ENCODE measurements at regions of chr12 and their contacts with region 1.

Region 1: GRCh38 chr12:92145731-92146496 is at the start of gene BTG1:
- DNase-seq: peak; percentile 94 to 100 (median 99)
- H3K4me3 ChIP-seq: peak within 1 kb of the TSS; percentile 98
- H3K4me3 Mint-ChIP-seq: peak within 1 kb of the TSS; percentile 95 to 100 (median 100)
- H3K27ac ChIP-seq: peak within 1 kb of the TSS; percentile 98
- H3K27ac Mint-ChIP-seq: peak within 1 kb of the TSS; percentile 95 to 100 (median 99)
- H3K4me1 ChIP-seq: peaks cover 16% of the 10 kb centered on the region
- H3K4me1 Mint-ChIP-seq: peaks cover 22 to 27% (median 25%) of the 10 kb centered on the region in 3 donors
- H3K27me3 ChIP-seq: no peaks in the 10 kb centered on the region
- H3K27me3 Mint-ChIP-seq: peaks cover 0 to 14% of the 10 kb centered on the region in 2 donors
- total RNA-seq, gene BTG1: 98.3 to 103 TPM

Region 2: DNA sequence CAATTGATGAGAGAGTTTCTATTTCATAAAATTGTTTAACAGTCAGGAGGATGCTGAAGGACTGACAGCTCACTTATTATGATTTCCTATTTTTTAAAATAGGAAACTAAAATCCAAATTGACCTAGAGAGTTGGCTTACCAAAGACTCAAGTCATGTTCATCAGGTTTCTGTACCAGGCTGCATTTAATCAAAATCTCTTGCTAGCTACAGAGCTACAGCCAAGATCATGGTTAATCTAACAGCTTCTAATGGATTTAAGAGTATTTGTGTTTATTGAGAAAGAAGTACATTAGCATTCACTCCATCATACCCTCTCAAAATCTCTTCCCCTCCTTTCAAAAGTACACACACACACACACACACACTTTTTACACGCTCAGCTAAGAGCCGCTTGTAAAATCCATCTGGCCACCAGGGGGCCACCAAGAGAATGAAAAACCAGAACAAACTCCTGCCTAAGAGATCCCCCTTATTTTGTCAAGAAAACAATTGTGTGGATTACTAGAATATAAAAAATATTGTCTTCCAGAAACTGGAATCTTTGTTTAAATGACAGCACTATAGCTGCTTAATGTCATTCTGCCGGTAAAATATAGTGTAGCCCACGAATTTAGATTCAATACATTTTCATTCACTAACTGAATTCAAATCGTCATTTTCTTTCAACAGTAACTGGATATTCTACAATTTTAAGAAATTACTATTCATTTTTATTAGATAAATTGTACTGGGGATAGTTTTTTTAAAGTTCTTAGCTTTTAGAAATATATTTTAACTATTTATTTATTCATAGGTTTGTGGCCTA is 334.2 kb before region 1 on chr12:
- CTCF ChIA-PET with region 1: interaction called, 26 read pairs
- POLR2A ChIA-PET with region 1: interaction called, 22 read pairs
- DNase-seq: peak; percentile 56 to 80 (median 62)
- H3K4me3 ChIP-seq: no peak overlapping the region
- H3K4me3 Mint-ChIP-seq: peak overlapping the region in 5 of 7 donors; percentile 1 to 60 (median 30)
- H3K27ac ChIP-seq: no peak overlapping the region
- H3K27ac Mint-ChIP-seq: peak overlapping the region in 7 of 8 donors; percentile 12 to 91 (median 88)
- H3K4me1 ChIP-seq: peaks cover 12% of the 10 kb centered on the region
- H3K4me1 Mint-ChIP-seq: peaks cover 20 to 38% (median 36%) of the 10 kb centered on the region in 3 donors
- H3K27me3 ChIP-seq: no peaks in the 10 kb centered on the region
- H3K27me3 Mint-ChIP-seq: peaks cover 0 to 1% of the 10 kb centered on the region in 2 donors

Region 3: DNA sequence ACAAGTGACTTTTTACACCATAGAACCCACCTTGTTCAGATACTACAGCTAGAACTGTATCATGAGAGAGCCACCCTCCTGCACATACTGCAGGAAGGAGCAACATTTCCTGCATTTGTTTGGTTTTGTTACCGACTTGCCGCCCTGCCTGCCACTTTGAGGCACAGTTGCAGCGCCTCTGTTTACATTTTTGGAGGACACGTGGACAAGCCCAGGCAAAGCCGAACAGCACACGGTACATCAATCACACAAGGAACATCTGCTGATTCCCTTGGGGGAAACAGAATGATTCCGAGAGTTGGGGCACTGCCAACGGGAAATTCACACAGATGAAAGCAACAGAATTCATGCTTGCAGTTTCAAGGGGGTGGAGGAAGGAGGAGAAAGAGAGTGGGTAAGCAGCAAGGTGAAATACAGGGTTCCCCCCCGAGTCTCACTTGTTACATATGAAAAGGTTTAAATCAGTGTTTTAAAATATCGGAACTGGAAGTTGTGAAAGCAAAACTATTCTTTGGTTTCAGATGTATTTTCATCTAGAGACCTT is 111.0 kb before region 1 on chr12:
- CTCF ChIA-PET with region 1: interaction called, 20 read pairs
- POLR2A ChIA-PET with region 1: interaction called, 78 read pairs
- DNase-seq: peak; percentile 11 to 75 (median 57)
- H3K4me3 ChIP-seq: peak overlapping the region; percentile 44
- H3K4me3 Mint-ChIP-seq: peak overlapping the region; percentile 89 to 96 (median 91)
- H3K27ac ChIP-seq: peak overlapping the region; percentile 36
- H3K27ac Mint-ChIP-seq: peak overlapping the region; percentile 96 to 100 (median 98)
- H3K4me1 ChIP-seq: peaks cover 78% of the 10 kb centered on the region
- H3K4me1 Mint-ChIP-seq: peaks cover 79 to 99% (median 91%) of the 10 kb centered on the region in 3 donors
- H3K27me3 ChIP-seq: no peaks in the 10 kb centered on the region
- H3K27me3 Mint-ChIP-seq: no peaks in the 10 kb centered on the region

Region 4: DNA sequence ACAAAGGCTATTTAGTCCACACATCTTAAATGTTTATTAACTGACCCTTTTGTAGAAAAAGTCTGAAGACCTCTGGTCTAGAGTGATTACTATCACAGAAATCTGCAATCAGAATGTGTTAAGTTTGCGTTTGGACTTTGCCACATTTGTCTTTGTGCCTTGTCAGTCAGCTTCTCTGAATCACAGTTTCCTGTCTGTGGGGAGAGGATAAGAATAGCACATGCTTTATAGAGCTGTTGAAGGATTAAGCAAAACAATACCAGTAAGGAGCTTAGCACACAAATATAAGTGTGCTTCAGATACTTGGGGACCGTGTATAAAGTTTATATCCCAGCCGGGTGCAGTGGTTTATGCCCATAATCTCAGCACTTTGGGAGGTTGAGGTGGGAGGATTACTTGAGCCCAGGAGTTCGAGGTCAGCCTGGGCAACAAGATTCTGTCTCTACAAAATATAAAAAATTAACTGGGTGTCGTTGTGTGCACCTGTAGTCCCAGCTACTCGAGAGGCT is 62.8 kb after region 1 on chr12:
- CTCF ChIA-PET with region 1: interaction called, 3 read pairs
- POLR2A ChIA-PET with region 1: interaction called, 50 read pairs
- DNase-seq: peak in 3 of 5 donors; percentile 48 to 55 (median 54)
- H3K4me3 ChIP-seq: peak overlapping the region; percentile 36
- H3K4me3 Mint-ChIP-seq: peak overlapping the region; percentile 52 to 93 (median 85)
- H3K27ac ChIP-seq: no peak overlapping the region
- H3K27ac Mint-ChIP-seq: peak overlapping the region; percentile 52 to 92 (median 79)
- H3K4me1 ChIP-seq: peaks cover 30% of the 10 kb centered on the region
- H3K4me1 Mint-ChIP-seq: peaks cover 29 to 30% (median 29%) of the 10 kb centered on the region in 3 donors
- H3K27me3 ChIP-seq: no peaks in the 10 kb centered on the region
- H3K27me3 Mint-ChIP-seq: no peaks in the 10 kb centered on the region

Region 5: GRCh38 chr12:92408072-92408900 is 262.4 kb after region 1 on chr12:
- CTCF ChIA-PET with region 1: interaction called, 23 read pairs
- POLR2A ChIA-PET with region 1: interaction called, 45 read pairs
- DNase-seq: peak in 3 of 5 donors; percentile 29 to 59 (median 41)
- H3K4me3 ChIP-seq: no peak overlapping the region
- H3K4me3 Mint-ChIP-seq: peak overlapping the region in 5 of 7 donors; percentile 6 to 57 (median 27)
- H3K27ac ChIP-seq: no peak overlapping the region
- H3K27ac Mint-ChIP-seq: peak overlapping the region in 7 of 8 donors; percentile 27 to 84 (median 77)
- H3K4me1 ChIP-seq: peaks cover 31% of the 10 kb centered on the region
- H3K4me1 Mint-ChIP-seq: peaks cover 40 to 56% (median 54%) of the 10 kb centered on the region in 3 donors
- H3K27me3 ChIP-seq: no peaks in the 10 kb centered on the region
- H3K27me3 Mint-ChIP-seq: no peaks in the 10 kb centered on the region

Region 6: DNA sequence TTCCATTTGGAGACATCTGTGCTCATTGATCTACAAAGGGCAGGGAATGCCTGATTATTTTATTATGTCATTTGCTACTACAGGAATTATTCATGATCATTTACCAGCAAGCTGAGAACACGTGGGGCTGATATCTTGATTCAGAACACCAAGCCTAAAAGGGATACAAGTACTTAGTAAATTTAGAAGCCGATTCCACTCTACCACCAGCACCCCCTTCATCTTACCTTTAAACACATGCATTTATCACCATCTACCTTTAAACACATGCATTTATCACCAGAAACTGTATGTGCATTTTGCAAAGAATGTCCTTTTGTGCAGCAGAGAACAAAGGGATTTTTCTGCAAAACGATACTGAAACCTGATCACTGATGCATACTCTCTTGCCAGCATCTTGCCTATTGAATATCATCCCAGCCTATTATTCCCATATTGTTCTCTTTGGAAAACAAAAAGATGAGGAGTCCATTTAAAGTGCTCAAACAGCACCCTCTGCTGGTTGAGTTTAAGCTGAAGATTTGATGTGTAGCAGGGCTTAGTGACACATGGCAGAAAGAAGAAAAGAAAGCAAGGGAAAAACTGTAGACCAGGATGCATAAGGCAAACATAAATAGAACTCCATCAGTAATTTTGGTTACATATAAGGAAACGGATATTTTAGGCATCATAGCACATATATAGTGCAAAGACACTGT is 424.3 kb after region 1 on chr12:
- CTCF ChIA-PET with region 1: interaction called, 33 read pairs
- POLR2A ChIA-PET with region 1: interaction called, 23 read pairs
- DNase-seq: peak in 4 of 5 donors; percentile 35 to 72 (median 66)
- H3K4me3 ChIP-seq: no peak overlapping the region
- H3K4me3 Mint-ChIP-seq: no peak overlapping the region
- H3K27ac ChIP-seq: no peak overlapping the region
- H3K27ac Mint-ChIP-seq: no peak overlapping the region
- H3K4me1 ChIP-seq: peaks cover 22% of the 10 kb centered on the region
- H3K4me1 Mint-ChIP-seq: peaks cover 0 to 9% (median 6%) of the 10 kb centered on the region in 3 donors
- H3K27me3 ChIP-seq: no peaks in the 10 kb centered on the region
- H3K27me3 Mint-ChIP-seq: no peaks in the 10 kb centered on the region